Caco-2 (cell line): ENCODE measurements at regions of chr15 and their contacts with region 1.

Region 1: DNA sequence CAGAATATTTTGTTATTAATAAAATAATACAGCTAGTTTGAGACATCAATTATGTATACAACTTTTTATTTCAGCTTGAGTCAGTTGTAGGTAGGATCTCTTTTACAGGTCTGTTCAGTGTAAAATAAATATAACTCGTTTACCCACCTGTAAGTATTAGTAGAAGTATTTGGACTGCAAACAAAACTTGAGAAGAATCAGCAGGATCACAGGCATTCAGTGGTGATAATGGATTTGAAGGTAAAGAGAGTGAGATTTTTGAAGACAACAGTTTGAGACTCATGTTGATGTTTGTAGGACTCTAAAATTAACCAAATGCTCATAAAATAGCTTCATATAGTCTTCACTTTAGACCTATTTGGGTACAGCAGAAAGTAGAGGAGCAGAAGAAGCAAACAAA is 35.5 kb upstream of the CCNB2 start:
- DNase-seq: peak in 1 of 2 experiments; percentile 34
- H3K4me3 ChIP-seq: no peak overlapping the region
- H3K4me3 Mint-ChIP-seq: peak overlapping the region; percentile 5
- H3K27ac Mint-ChIP-seq: peak overlapping the region; percentile 46
- H3K4me1 ChIP-seq: 0 out of 2 replicates have a peak, but pooled peaks cover 16% of the 10 kb centered on the region
- H3K4me1 Mint-ChIP-seq: peaks cover 7% of the 10 kb centered on the region
- H3K27me3 ChIP-seq: no peaks in the 10 kb centered on the region
- H3K27me3 Mint-ChIP-seq: no peaks in the 10 kb centered on the region
- CTCF ChIP-seq: no peak

Region 2: DNA sequence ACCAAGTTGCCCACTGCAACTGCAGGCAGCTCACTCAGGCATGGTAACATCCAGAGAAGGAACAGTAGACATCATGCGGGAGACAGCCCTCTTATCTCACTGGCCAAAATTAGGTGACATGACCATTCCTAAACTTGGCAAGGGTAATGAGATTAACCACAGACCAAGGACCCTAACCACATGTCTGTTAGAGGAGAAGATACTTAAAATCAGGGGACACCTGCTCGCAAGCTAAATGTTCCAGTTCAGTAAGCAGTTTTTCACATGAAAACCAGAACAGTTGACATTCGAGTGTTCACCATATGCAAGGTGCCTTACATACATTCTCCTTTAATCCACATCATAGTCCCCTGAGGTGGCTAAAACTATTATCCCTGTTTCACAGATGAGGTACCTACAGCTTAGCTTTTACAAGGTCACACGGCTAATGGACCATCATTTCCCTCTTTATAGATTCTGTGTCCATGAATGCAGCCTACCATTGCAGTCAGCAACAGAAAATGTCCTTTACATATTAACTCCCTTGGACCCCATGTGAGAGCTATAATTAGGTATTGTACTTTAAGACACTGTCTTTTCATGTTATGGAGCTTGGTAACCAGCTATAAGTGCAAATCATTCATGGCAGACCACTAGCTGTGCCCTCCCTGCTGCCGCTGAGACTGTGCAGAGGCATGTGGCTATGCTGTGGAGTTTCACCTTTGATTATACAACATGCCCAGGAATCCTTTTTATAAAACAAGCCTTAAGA is 483.6 kb before region 1 on chr15:
- CTCF ChIA-PET with region 1: no interaction called
- POLR2A ChIA-PET with region 1: no interaction called
- intact Hi-C with region 1: no loop called
- DNase-seq: no peak
- H3K4me3 ChIP-seq: no peak overlapping the region
- H3K4me3 Mint-ChIP-seq: no peak overlapping the region
- H3K27ac Mint-ChIP-seq: no peak overlapping the region
- H3K4me1 ChIP-seq: peaks cover 34% of the 10 kb centered on the region
- H3K4me1 Mint-ChIP-seq: peaks cover 19% of the 10 kb centered on the region
- H3K27me3 ChIP-seq: no peaks in the 10 kb centered on the region
- H3K27me3 Mint-ChIP-seq: no peaks in the 10 kb centered on the region
- CTCF ChIP-seq: no peak

Region 3: GRCh38 chr15:58987489-58988005 is 81.9 kb before region 1 on chr15 and contains the start of gene RNF111:
- CTCF ChIA-PET with region 1: no interaction called
- POLR2A ChIA-PET with region 1: no interaction called
- intact Hi-C with region 1: loop called (anchors 5 kb)
- DNase-seq: peak; percentile 89 to 94
- H3K4me3 ChIP-seq: peak within 1 kb of the TSS; percentile 94
- H3K4me3 Mint-ChIP-seq: peak within 1 kb of the TSS; percentile 87
- H3K27ac Mint-ChIP-seq: peak within 1 kb of the TSS; percentile 81
- H3K4me1 ChIP-seq: peaks cover 17% of the 10 kb centered on the region; the same call in 1 of the 2 replicates
- H3K4me1 Mint-ChIP-seq: no peaks in the 10 kb centered on the region
- H3K27me3 ChIP-seq: no peaks in the 10 kb centered on the region
- H3K27me3 Mint-ChIP-seq: peaks cover 4% of the 10 kb centered on the region
- CTCF ChIP-seq: no peak
- total RNA-seq, gene RNF111: 26.1 and 30.5 TPM in 2 replicates

Region 4: GRCh38 chr15:59028387-59028955 is 41.0 kb before region 1 on chr15:
- CTCF ChIA-PET with region 1: no interaction called
- POLR2A ChIA-PET with region 1: no interaction called
- intact Hi-C with region 1: no loop called
- DNase-seq: no peak
- H3K4me3 ChIP-seq: no peak overlapping the region
- H3K4me3 Mint-ChIP-seq: no peak overlapping the region
- H3K27ac Mint-ChIP-seq: no peak overlapping the region
- H3K4me1 ChIP-seq: no peaks in the 10 kb centered on the region
- H3K4me1 Mint-ChIP-seq: no peaks in the 10 kb centered on the region
- H3K27me3 ChIP-seq: no peaks in the 10 kb centered on the region
- H3K27me3 Mint-ChIP-seq: no peaks in the 10 kb centered on the region
- CTCF ChIP-seq: no peak